PC-3 (cell line): ENCODE measurements at regions of chr3 and their contacts with region 1.

Region 1: GRCh38 chr3:151197981-151198767 is 4.8 kb downstream of the GPR171 start:
- DNase-seq: no peak
- ATAC-seq: no peak
- H3K4me3 ChIP-seq: no peak overlapping the region
- H3K27ac ChIP-seq: no peak overlapping the region
- H3K4me1 ChIP-seq: no peaks in the 10 kb centered on the region
- H3K27me3 ChIP-seq: no peaks in the 10 kb centered on the region
- CTCF ChIP-seq: no peak

Region 2: DNA sequence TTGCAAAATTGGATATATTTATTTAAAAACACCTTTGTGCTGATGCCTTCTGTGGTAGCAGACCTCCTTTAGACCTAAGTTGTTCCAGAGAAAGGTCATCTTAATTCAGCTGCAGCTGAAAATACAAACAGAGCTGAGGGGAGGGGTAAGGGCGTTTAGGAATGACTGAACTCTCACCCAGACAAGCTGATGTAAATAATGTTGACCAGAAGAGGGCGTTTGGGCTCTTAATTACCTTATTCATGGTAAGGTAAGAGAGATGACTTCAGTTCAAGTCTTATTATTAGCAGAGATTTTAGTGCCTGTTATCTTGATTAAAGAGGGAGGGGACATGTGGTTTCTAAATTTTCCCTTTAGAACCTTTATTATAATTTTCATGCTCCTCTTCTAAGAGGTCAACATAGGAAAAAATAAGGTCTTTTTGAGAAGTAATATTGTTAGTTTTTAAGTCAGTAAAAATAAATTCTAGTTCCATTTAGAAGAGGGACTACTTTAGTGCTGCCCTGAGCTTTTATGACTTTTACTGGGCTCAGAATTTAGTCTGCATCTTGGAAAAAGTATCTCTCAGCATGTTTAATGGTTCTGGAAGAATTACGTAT is 41.5 kb before region 1 on chr3:
- CTCF ChIA-PET with region 1: no interaction called
- POLR2A ChIA-PET with region 1: interaction called, 24 read pairs
- intact Hi-C with region 1: no loop called
- DNase-seq: peak; percentile 88
- ATAC-seq: peak; percentile 94
- H3K4me3 ChIP-seq: no peak overlapping the region
- H3K27ac ChIP-seq: no peak overlapping the region
- H3K4me1 ChIP-seq: no peaks in the 10 kb centered on the region
- H3K27me3 ChIP-seq: no peaks in the 10 kb centered on the region
- CTCF ChIP-seq: peak; percentile 77